ENCODE measurements at regions of chr5 and their contacts with region 1.

Region 1: GRCh38 chr5:177317959-177318377 is 6.3 kb upstream of the MXD3 start:
- DNase-seq: peak; percentile 48
- ATAC-seq: peak; percentile 87
- H3K4me3 Mint-ChIP-seq: no peak overlapping the region
- H3K27ac Mint-ChIP-seq: no peak overlapping the region
- H3K4me1 Mint-ChIP-seq: peaks cover 15% of the 10 kb centered on the region
- H3K27me3 Mint-ChIP-seq: no peaks in the 10 kb centered on the region
- CTCF ChIP-seq: no peak

Region 2: DNA sequence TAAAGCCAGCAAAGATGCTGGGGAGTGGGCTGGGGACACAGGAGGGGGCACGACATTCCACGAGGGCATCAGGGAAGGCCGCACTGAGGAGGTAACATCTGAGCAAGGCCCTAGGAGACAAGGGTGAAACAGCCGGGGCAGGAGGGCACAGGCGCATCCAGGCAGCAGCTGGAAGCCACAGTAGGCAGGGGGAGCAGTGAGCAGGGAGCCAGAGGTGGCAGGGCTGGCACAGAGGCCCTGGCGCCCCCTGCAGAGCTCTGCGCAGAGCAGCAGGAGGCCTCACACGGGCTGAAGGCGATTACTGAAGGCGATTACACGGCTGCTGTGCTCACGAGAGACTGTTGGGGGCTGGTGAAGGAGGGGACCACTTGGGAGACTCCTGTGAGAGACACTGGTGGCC is 18.1 kb after region 1 on chr5:
- CTCF ChIA-PET with region 1: interaction called, 3 read pairs
- POLR2A ChIA-PET with region 1: interaction called, 3 read pairs
- intact Hi-C with region 1: loop called (anchors 2 kb)
- DNase-seq: no peak
- ATAC-seq: peak; percentile 62
- H3K4me3 Mint-ChIP-seq: no peak overlapping the region
- H3K27ac Mint-ChIP-seq: no peak overlapping the region
- H3K4me1 Mint-ChIP-seq: peaks cover 16% of the 10 kb centered on the region
- H3K27me3 Mint-ChIP-seq: no peaks in the 10 kb centered on the region
- CTCF ChIP-seq: no peak

Region 3: GRCh38 chr5:177382423-177383029 is 64.6 kb after region 1 on chr5:
- CTCF ChIA-PET with region 1: interaction called, 3 read pairs
- POLR2A ChIA-PET with region 1: interaction called, 3 read pairs
- intact Hi-C with region 1: loop called (anchors 2 kb)
- DNase-seq: no peak
- ATAC-seq: no peak
- H3K4me3 Mint-ChIP-seq: no peak overlapping the region
- H3K27ac Mint-ChIP-seq: no peak overlapping the region
- H3K4me1 Mint-ChIP-seq: peaks cover 3% of the 10 kb centered on the region
- H3K27me3 Mint-ChIP-seq: peaks cover 11% of the 10 kb centered on the region
- CTCF ChIP-seq: no peak